PC-9 (cell line): ENCODE measurements at regions of chr17 and their contacts with region 1.

Region 1: DNA sequence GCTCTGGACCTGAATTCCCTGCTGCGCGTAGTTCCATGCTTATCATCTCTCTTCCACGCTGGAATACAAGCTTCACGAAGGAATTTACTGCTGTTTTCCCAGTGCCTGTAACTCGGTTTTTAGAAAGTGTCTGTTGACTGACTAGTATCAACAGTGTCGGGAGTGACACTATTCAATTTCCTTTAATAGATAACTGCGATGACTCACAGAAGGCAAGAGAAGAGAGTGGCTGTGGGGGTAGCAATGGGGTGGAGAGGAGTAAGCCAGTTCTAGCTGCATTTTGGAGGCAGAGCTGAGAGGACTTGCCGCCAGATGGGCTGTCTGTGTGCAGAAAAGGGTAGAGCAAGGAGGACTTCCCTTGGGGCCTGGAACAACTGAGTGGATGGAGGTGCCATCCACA is 25.2 kb downstream of the B4GALNT2 start:
- DNase-seq: no peak
- H3K4me3 ChIP-seq: no peak overlapping the region
- H3K27ac ChIP-seq: no peak overlapping the region
- H3K4me1 ChIP-seq: no peaks in the 10 kb centered on the region
- H3K27me3 ChIP-seq: peaks cover 5% of the 10 kb centered on the region; the same call in 1 of the 2 replicates
- CTCF ChIP-seq: no peak

Region 2: GRCh38 chr17:48671697-48672171 is 486.1 kb before region 1 on chr17:
- CTCF ChIA-PET with region 1: interaction called, 13 read pairs
- POLR2A ChIA-PET with region 1: no interaction called
- intact Hi-C with region 1: no loop called
- DNase-seq: peak; percentile 39 to 66
- H3K4me3 ChIP-seq: peak overlapping the region; percentile 37; the same call in 1 of the 2 replicates
- H3K27ac ChIP-seq: no peak overlapping the region
- H3K4me1 ChIP-seq: no peaks in the 10 kb centered on the region
- H3K27me3 ChIP-seq: peaks cover 8% of the 10 kb centered on the region
- CTCF ChIP-seq: peak; percentile 97

Region 3: DNA sequence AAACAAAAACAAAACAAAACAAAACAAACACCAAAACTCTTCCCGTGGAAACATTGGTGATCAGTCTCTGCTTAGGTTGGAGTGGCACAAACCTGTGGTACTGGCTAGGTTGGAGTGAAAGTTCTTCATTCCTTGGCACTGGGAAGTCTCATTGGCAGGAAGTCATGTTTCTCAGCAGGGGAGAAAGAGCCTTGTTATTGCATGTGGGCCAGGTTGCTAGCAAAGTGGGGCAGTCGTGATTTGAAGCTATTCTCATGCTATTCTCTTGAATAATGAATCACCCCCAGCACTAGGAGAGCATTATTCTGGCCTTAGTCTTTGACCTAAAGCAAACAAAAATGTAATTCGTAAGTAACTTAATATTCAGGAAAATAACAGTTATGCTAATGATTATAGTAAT is 49.5 kb before region 1 on chr17:
- CTCF ChIA-PET with region 1: no interaction called
- POLR2A ChIA-PET with region 1: no interaction called
- intact Hi-C with region 1: no loop called
- DNase-seq: peak; percentile 31 to 77
- H3K4me3 ChIP-seq: no peak overlapping the region
- H3K27ac ChIP-seq: peak overlapping the region; percentile 6; the same call in 1 of the 2 replicates
- H3K4me1 ChIP-seq: peaks cover 57% of the 10 kb centered on the region
- H3K27me3 ChIP-seq: no peaks in the 10 kb centered on the region
- CTCF ChIP-seq: no peak

Region 4: DNA sequence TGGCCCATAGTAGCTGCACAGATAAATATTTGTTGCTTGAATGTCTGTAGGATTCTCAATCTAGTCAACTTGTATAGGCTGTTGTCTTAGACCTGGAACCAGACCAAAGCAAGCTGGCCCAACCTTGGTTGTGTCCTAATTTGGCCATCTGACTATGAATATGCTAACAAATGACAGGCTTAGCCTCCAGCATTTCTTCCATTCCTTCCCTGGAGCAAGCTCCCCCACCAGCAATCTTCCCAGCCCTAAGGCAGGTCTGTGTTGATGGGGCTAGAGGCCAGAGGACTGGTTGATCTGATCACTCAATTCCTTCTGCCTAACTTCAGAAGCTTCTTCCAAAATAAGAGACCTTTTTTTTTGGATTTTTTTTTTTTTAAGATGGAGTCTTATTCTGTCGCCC is 82.2 kb after region 1 on chr17:
- CTCF ChIA-PET with region 1: interaction called, 10 read pairs
- POLR2A ChIA-PET with region 1: no interaction called
- intact Hi-C with region 1: no loop called
- DNase-seq: no peak
- H3K4me3 ChIP-seq: no peak overlapping the region
- H3K27ac ChIP-seq: no peak overlapping the region
- H3K4me1 ChIP-seq: no peaks in the 10 kb centered on the region
- H3K27me3 ChIP-seq: no peaks in the 10 kb centered on the region
- CTCF ChIP-seq: no peak